ENCODE measurements at regions of chr2 and their contacts with region 1.

Region 1: GRCh38 chr2:64114063-64114911 is 29.9 kb downstream of the PELI1 start:
- DNase-seq: no peak
- H3K4me3 Mint-ChIP-seq: peak overlapping the region; percentile 17
- H3K27ac Mint-ChIP-seq: peak overlapping the region; percentile 59
- H3K4me1 Mint-ChIP-seq: peaks cover 73% of the 10 kb centered on the region
- H3K27me3 Mint-ChIP-seq: no peaks in the 10 kb centered on the region

Region 2: GRCh38 chr2:63692002-63692606 is 422.2 kb before region 1 on chr2:
- intact Hi-C with region 1: no loop called
- DNase-seq: no peak
- H3K4me3 Mint-ChIP-seq: no peak overlapping the region
- H3K27ac Mint-ChIP-seq: no peak overlapping the region
- H3K4me1 Mint-ChIP-seq: no peaks in the 10 kb centered on the region
- H3K27me3 Mint-ChIP-seq: peaks cover 4% of the 10 kb centered on the region

Region 3: GRCh38 chr2:63888490-63889402 is 225.5 kb before region 1 on chr2:
- intact Hi-C with region 1: no loop called
- DNase-seq: peak; percentile 12
- H3K4me3 Mint-ChIP-seq: no peak overlapping the region
- H3K27ac Mint-ChIP-seq: peak overlapping the region; percentile 37
- H3K4me1 Mint-ChIP-seq: peaks cover 8% of the 10 kb centered on the region
- H3K27me3 Mint-ChIP-seq: no peaks in the 10 kb centered on the region

Region 4: GRCh38 chr2:64144057-64145013 is 30.0 kb after region 1 on chr2 and contains the start of gene PELI1:
- intact Hi-C with region 1: loop called (anchors 1 kb)
- DNase-seq: peak; percentile 90
- H3K4me3 Mint-ChIP-seq: peak within 1 kb of the TSS; percentile 98
- H3K27ac Mint-ChIP-seq: peak within 1 kb of the TSS; percentile 97
- H3K4me1 Mint-ChIP-seq: peaks cover 28% of the 10 kb centered on the region
- H3K27me3 Mint-ChIP-seq: peaks cover 3% of the 10 kb centered on the region
- total RNA-seq, gene PELI1: 47.1 and 50.4 TPM in 2 replicates

Region 5: GRCh38 chr2:64474121-64474571 is 359.9 kb after region 1 on chr2:
- intact Hi-C with region 1: no loop called
- DNase-seq: no peak
- H3K4me3 Mint-ChIP-seq: no peak overlapping the region
- H3K27ac Mint-ChIP-seq: no peak overlapping the region
- H3K4me1 Mint-ChIP-seq: peaks cover 20% of the 10 kb centered on the region
- H3K27me3 Mint-ChIP-seq: peaks cover 11% of the 10 kb centered on the region

Region 6: GRCh38 chr2:64730551-64731262 is 616.4 kb after region 1 on chr2:
- intact Hi-C with region 1: loop called (anchors 10 kb)
- DNase-seq: peak; percentile 35
- H3K4me3 Mint-ChIP-seq: peak overlapping the region; percentile 85
- H3K27ac Mint-ChIP-seq: peak overlapping the region; percentile 89
- H3K4me1 Mint-ChIP-seq: peaks cover 77% of the 10 kb centered on the region
- H3K27me3 Mint-ChIP-seq: no peaks in the 10 kb centered on the region